ENCODE measurements at regions of chr11 and their contacts with region 1.

Region 1: DNA sequence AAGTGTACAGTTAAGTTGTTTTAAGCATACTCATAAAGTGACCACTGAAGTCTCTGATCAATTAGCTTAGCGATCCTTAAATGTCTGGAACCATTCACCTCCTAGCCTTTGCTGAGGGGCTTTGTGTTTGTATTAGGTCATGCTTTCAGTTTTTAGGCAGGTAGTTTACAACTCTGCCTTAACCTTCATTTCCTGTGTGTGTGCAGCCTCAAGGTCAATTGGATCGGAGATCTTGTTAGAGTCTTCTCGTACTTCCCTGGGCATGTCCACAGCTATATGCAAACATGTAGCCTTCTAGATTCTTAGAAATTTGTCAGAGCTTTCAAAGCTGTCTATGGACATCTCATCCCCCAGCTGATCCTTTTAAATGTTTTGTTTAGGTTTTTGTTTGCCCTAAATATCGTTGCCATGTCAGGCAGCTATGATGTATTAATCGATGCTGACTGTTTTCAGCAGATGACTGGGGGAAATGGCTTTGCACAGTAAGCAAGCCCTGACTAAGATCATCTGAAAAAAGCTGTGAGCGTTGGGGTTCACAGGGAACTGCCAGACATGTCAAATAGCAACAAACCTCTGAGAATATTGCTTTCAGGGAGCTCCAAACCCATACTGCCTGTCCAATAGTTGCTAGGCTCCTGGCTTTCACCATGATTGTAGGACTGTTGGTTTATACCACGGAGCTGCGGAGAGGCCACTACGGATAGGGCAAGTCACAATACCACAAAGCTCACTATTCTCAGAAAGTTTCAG is 45.6 kb downstream of the GLYAT start:
- DNase-seq: peak; percentile 39
- ATAC-seq: peak; percentile 83
- H3K4me3 Mint-ChIP-seq: peak overlapping the region; percentile 47
- H3K27ac Mint-ChIP-seq: peak overlapping the region; percentile 73
- H3K4me1 Mint-ChIP-seq: peaks cover 18% of the 10 kb centered on the region
- H3K27me3 Mint-ChIP-seq: no peaks in the 10 kb centered on the region

Region 2: GRCh38 chr11:58675334-58676155 is 10.6 kb before region 1 on chr11:
- CTCF ChIA-PET with region 1: interaction called, 11 read pairs
- POLR2A ChIA-PET with region 1: no interaction called
- DNase-seq: peak; percentile 77
- ATAC-seq: peak; percentile 88
- H3K4me3 Mint-ChIP-seq: no peak overlapping the region
- H3K27ac Mint-ChIP-seq: no peak overlapping the region
- H3K4me1 Mint-ChIP-seq: no peaks in the 10 kb centered on the region
- H3K27me3 Mint-ChIP-seq: no peaks in the 10 kb centered on the region

Measured in activated CD8-positive, alpha-beta T cell treated with anti-CD3 and anti-CD28 coated beads, Interleukin-2, amount 10 ng/mL, durations not matched to agents 7 days and 5 days (primary cell).